ENCODE measurements at regions of chr1 and their contacts with region 1.

Region 1: DNA sequence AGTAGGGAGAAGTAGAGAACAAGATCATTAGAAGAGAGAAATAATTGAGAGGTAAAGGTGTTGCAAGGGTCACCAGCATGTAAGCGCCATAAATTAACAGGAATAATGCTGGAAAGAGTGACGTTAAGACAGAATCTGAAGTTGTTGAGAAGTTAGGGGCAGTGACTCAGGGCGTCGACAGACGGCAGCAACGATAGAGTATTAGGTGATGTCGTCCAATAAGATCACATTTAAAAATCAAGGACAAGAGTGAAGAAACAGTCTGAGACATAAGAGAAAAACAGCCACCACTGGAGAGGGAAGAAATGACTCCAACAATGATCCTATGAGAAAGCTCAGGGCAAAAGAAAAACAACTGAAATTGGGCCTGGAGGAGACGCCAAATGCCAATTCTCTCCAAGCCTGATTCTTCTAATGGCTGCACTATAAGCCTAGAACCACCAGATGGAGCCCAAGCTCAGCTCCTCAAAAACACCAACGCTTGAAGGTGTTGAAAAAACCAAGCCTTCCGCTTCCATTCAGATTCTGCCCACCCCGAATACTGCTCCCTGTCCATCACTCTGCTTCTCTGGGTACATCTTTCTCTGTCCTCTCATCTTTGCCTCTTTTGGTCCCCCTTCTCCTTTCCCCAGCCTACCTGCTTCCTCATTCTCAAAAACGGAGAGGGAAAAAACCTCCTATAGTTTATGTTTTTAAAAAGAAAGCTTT is 70.0 kb downstream of the LUZP1 start:
- DNase-seq: peak; percentile 84
- H3K4me3 Mint-ChIP-seq: no peak overlapping the region
- H3K27ac Mint-ChIP-seq: peak overlapping the region; percentile 18
- H3K4me1 Mint-ChIP-seq: peaks cover 68% of the 10 kb centered on the region
- H3K27me3 Mint-ChIP-seq: no peaks in the 10 kb centered on the region
- CTCF ChIP-seq: peak; percentile 91

Region 2: GRCh38 chr1:22976461-22977243 is 122.0 kb before region 1 on chr1:
- CTCF ChIA-PET with region 1: interaction called, 5 read pairs
- POLR2A ChIA-PET with region 1: no interaction called
- intact Hi-C with region 1: loop called (anchors 1 kb)
- DNase-seq: peak; percentile 88
- H3K4me3 Mint-ChIP-seq: no peak overlapping the region
- H3K27ac Mint-ChIP-seq: no peak overlapping the region
- H3K4me1 Mint-ChIP-seq: peaks cover 30% of the 10 kb centered on the region
- H3K27me3 Mint-ChIP-seq: no peaks in the 10 kb centered on the region
- CTCF ChIP-seq: peak; percentile 92

Region 3: GRCh38 chr1:23108918-23109533 is 10.4 kb after region 1 on chr1:
- CTCF ChIA-PET with region 1: interaction called, 16 read pairs
- POLR2A ChIA-PET with region 1: interaction called, 57 read pairs
- intact Hi-C with region 1: no loop called
- DNase-seq: no peak
- H3K4me3 Mint-ChIP-seq: no peak overlapping the region
- H3K27ac Mint-ChIP-seq: no peak overlapping the region
- H3K4me1 Mint-ChIP-seq: peaks cover 26% of the 10 kb centered on the region
- H3K27me3 Mint-ChIP-seq: no peaks in the 10 kb centered on the region
- CTCF ChIP-seq: no peak

Region 4: DNA sequence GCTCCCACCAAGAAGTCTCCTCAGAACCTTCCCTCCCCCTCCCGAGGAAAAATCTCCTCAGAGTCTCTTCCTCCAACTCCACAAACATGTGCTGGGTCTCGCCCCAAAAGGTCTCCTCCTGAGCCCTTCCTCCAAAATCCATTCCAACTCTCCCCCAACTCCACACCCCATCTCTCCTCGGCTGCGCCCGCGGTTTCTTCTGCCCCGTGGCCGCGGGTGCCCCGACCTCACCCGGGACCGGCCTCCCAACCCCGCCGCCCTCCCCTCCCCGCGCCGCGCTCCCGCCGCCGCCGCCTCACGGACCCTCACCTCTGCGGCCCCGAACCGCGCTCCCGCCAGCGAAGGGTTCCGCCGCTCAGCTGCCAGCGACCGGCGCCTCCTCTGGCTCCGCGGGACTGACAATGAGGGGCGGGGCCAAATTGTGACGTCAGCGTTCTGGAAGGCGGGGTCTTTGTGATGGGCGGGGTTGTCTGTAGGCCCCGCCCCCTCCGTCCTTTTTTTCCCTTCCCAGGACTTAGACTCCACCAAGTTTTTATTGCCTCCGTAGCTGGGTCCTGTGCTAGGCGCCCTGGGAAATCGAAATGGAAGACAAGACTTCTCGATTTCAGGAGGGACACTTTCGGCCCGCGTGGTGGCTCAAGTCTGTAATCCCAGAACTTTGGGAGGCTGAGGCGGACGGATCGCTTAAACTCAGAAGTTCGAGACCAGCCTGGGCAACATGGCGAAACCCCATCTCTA is 70.0 kb after region 1 on chr1 and contains the start of gene LUZP1:
- CTCF ChIA-PET with region 1: interaction called, 20 read pairs
- POLR2A ChIA-PET with region 1: interaction called, 154 read pairs
- intact Hi-C with region 1: loop called (anchors 1 kb)
- DNase-seq: peak; percentile 90
- H3K4me3 Mint-ChIP-seq: peak within 1 kb of the TSS; percentile 89
- H3K27ac Mint-ChIP-seq: peak within 1 kb of the TSS; percentile 89
- H3K4me1 Mint-ChIP-seq: peaks cover 26% of the 10 kb centered on the region
- H3K27me3 Mint-ChIP-seq: no peaks in the 10 kb centered on the region
- CTCF ChIP-seq: no peak
- total RNA-seq, gene LUZP1: 30.1 and 37.2 TPM in 2 replicates

Region 5: GRCh38 chr1:23184212-23184934 is 85.8 kb after region 1 on chr1:
- CTCF ChIA-PET with region 1: interaction called, 405 read pairs
- POLR2A ChIA-PET with region 1: interaction called, 71 read pairs
- intact Hi-C with region 1: loop called (anchors 1 kb)
- DNase-seq: peak; percentile 56
- H3K4me3 Mint-ChIP-seq: no peak overlapping the region
- H3K27ac Mint-ChIP-seq: no peak overlapping the region
- H3K4me1 Mint-ChIP-seq: peaks cover 12% of the 10 kb centered on the region
- H3K27me3 Mint-ChIP-seq: no peaks in the 10 kb centered on the region
- CTCF ChIP-seq: peak; percentile 92

Region 6: DNA sequence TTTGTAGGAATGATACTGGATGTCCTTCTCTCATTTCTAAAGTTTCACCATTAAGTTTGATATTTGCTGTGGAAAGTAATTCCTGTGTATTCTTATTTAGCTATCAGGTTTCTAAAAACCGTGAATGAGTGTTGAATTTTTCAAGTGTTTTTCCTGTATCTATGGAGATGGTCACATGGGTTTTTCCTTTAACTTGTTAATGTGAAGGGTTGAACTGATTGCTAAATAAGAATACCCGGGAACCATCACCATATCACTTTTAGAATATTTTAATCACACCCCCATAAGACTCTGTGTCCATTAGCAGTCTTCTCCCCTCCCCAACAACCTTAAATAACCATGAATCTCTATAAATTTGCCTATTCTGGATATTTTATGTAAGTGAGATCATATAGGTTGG is 401.8 kb after region 1 on chr1:
- CTCF ChIA-PET with region 1: no interaction called
- POLR2A ChIA-PET with region 1: no interaction called
- intact Hi-C with region 1: no loop called
- DNase-seq: no peak
- H3K4me3 Mint-ChIP-seq: no peak overlapping the region
- H3K27ac Mint-ChIP-seq: no peak overlapping the region
- H3K4me1 Mint-ChIP-seq: no peaks in the 10 kb centered on the region
- H3K27me3 Mint-ChIP-seq: no peaks in the 10 kb centered on the region
- CTCF ChIP-seq: no peak

Region 7: GRCh38 chr1:23539698-23540266 is 441.2 kb after region 1 on chr1:
- CTCF ChIA-PET with region 1: no interaction called
- POLR2A ChIA-PET with region 1: no interaction called
- intact Hi-C with region 1: loop called (anchors 10 kb)
- DNase-seq: peak; percentile 90
- H3K4me3 Mint-ChIP-seq: no peak overlapping the region
- H3K27ac Mint-ChIP-seq: no peak overlapping the region
- H3K4me1 Mint-ChIP-seq: peaks cover 18% of the 10 kb centered on the region
- H3K27me3 Mint-ChIP-seq: no peaks in the 10 kb centered on the region
- CTCF ChIP-seq: peak; percentile 91